Endothelial cell of umbilical vein (primary cell): ENCODE measurements at regions of chr20 and their contacts with region 1.

Region 1: DNA sequence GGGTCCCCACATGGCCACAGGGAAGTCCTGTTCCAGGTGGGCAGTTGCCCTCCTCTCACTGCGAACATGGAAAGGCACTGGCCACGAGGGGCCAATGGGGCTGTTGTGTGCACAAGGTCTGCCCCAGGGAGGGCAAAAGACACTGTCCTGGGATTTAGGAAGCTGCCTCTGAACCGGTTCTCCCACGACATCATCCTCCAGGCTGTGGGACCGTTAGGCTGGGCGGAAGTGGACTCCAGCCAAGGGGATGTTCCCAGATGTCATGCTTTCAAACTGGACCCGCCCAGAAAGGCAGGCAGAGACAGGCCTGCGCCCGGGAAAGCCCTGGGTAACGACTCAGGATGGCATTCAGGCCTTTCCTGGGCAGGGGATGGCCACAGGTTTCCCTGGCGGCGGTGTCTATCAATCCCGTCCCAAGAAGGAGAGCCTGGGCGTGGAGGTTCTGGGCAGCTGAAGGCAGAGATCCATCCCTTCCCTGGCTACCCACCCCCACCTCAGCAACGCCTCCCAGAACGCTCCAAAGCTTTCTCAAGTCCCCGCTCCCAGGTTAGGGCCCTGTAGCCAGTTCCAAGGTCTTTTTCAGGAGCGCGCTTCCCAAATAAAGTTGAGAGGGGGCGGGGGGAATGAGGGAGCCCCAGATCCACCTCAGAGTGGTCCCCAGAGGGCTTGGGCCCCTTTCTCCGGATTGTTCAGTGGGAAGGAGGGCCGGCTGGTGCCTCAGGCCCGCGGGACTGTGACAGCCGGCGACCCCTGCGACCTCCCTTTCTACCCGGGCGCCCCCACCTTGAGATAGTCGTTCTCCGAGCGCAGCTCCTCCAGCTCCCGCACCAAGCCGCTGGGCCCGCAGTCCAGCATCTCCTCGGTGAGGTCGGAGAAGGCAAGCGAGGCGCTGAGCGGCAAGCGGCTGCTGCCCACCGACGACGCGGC is 13.8 kb upstream of the TLDC2 start:
- DNase-seq: peak; percentile 44
- H3K4me3 ChIP-seq: peak overlapping the region; percentile 27 to 54 (median 41)
- H3K27ac ChIP-seq: no peak overlapping the region
- H3K4me1 ChIP-seq: peaks cover 18% of the 10 kb centered on the region
- H3K27me3 ChIP-seq: no peaks in the 10 kb centered on the region
- CTCF ChIP-seq: no peak
- POLR2A ChIP-seq: peak; percentile 45

Region 2: DNA sequence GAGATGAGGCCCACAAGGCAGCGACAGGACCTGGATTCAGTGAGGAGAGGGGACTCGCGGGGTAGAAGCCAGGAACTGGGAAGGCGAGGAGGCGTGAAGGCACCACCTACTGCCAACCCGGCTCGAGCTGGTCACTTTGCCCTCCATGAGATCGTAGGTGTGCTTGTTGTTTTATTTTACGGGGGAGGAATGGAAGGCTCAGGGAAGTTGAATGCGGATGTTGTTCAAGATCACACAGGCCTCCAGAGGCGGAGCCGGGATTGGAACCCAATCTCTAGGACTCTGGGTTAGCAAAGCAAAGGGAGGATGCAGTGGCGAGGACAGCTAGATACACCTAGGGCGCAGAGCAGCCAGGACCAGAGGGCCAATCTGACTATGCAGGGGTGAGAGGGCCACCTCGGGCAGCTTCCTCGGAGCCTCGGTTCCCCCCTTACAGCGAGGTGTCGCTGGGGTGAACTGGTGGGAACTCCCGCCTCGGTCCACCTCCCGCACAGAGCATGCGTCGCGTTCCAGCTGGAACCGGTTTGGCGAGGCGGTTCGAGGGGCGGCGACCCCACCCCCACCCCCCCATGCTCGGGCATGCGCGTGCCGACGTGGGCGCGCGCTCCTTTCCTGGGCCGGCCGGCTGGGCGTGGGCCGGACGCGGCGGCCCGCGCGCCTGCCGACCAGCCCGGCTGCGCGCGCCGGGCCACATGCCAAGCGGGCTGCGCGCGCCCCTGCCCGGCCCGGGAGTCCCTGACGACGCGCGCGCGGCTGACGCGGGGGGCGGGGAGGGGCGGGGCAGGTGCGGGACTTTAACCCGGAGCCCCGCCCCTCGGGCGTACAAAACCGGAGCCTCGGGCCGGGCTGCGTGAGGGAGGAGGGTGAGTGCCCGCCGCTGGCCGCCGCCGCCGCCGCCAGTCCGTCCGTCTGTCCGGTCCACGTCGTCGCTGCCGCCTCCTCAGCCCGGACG is 401.2 kb before region 1 on chr20:
- CTCF ChIA-PET with region 1: no interaction called
- POLR2A ChIA-PET with region 1: no interaction called
- dilution Hi-C with region 1: no loop called
- intact Hi-C with region 1: loop called (anchors 10 kb)
- DNase-seq: peak; percentile 85
- H3K4me3 ChIP-seq: peak overlapping the region in 1 of 3 experiments; percentile 74
- H3K27ac ChIP-seq: peak overlapping the region; percentile 2
- H3K4me1 ChIP-seq: peaks cover 28% of the 10 kb centered on the region
- H3K27me3 ChIP-seq: no peaks in the 10 kb centered on the region
- CTCF ChIP-seq: no peak
- POLR2A ChIP-seq: peak; percentile 79

Region 3: GRCh38 chr20:36613974-36614373 is 248.2 kb before region 1 on chr20:
- CTCF ChIA-PET with region 1: interaction called, 13 read pairs
- POLR2A ChIA-PET with region 1: interaction called, 5 read pairs
- dilution Hi-C with region 1: no loop called
- intact Hi-C with region 1: loop called (anchors 2 kb)
- DNase-seq: no peak
- H3K4me3 ChIP-seq: no peak overlapping the region
- H3K27ac ChIP-seq: no peak overlapping the region
- H3K4me1 ChIP-seq: no peaks in the 10 kb centered on the region
- H3K27me3 ChIP-seq: no peaks in the 10 kb centered on the region
- CTCF ChIP-seq: no peak
- POLR2A ChIP-seq: no peak

Region 4: GRCh38 chr20:36773597-36774390 is 88.3 kb before region 1 on chr20 and contains the start of gene DSN1:
- CTCF ChIA-PET with region 1: interaction called, 16 read pairs
- POLR2A ChIA-PET with region 1: no interaction called
- dilution Hi-C with region 1: no loop called
- intact Hi-C with region 1: loop called (anchors 5 kb)
- DNase-seq: peak; percentile 99
- H3K4me3 ChIP-seq: peak within 1 kb of the TSS; percentile 53 to 90 (median 79)
- H3K27ac ChIP-seq: peak within 1 kb of the TSS; percentile 89
- H3K4me1 ChIP-seq: peaks cover 17% of the 10 kb centered on the region
- H3K27me3 ChIP-seq: no peaks in the 10 kb centered on the region
- CTCF ChIP-seq: peak in 1 of 2 donors; percentile 79
- POLR2A ChIP-seq: peak; percentile 86
- total RNA-seq, gene DSN1: 24.4 and 25.0 TPM in 2 replicates

Region 5: DNA sequence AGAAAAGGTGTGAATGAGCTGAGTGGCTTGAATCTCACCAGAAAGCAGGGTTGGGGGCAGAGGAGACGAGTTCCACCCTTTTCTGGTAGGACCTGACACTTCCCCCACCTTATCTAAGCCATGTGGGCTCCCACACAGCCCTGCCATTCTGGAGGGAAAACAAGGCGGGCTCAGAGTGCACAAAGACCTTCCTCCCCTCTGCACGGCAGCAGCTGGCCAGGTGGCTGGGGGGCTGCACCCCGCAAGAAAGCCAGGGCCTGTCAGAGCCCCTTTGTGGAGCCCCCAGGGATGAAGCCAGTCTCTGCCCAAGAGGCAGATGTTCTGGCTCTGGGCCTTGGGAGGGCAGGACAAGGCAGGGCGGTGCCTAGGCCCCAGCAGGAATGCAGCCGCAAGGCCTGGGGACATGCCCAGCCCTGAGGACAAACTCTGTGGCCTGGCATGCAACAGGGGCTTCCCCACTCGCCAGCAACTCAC is 40.1 kb before region 1 on chr20:
- CTCF ChIA-PET with region 1: interaction called, 11 read pairs
- POLR2A ChIA-PET with region 1: no interaction called
- dilution Hi-C with region 1: no loop called
- intact Hi-C with region 1: no loop called
- DNase-seq: no peak
- H3K4me3 ChIP-seq: no peak overlapping the region
- H3K27ac ChIP-seq: no peak overlapping the region
- H3K4me1 ChIP-seq: peaks cover 2% of the 10 kb centered on the region
- H3K27me3 ChIP-seq: no peaks in the 10 kb centered on the region
- CTCF ChIP-seq: no peak
- POLR2A ChIP-seq: no peak